ENCODE measurements at regions of chr9 and their contacts with region 1.

Region 1: GRCh38 chr9:75238311-75238978 is 150.1 kb downstream of the OSTF1 start:
- DNase-seq: peak; percentile 28
- H3K4me3 ChIP-seq: no peak overlapping the region
- CTCF ChIP-seq: peak; percentile 48

Region 2: DNA sequence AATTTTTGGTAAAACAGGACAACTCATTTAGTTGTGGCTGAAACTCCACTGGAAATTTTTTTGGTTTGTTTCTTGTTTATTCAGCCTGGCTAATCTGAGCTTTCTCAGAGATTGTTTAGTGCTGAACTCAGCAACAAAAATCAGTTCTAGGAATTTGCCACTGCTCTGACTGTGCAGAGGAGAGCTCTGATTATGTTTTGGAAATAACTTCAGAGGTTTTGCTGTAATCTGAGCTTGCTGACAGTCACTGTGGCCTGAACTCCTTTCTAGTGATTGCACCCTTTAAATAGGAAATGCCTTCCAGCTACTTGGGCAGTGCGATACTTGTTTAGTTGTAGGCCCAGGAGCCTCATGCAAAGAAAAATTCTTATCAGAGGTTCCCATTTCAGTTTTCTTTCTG is 89.9 kb before region 1 on chr9:
- CTCF ChIA-PET with region 1: no interaction called
- POLR2A ChIA-PET with region 1: no interaction called
- DNase-seq: peak; percentile 93
- H3K4me3 ChIP-seq: no peak overlapping the region
- CTCF ChIP-seq: no peak

Region 3: DNA sequence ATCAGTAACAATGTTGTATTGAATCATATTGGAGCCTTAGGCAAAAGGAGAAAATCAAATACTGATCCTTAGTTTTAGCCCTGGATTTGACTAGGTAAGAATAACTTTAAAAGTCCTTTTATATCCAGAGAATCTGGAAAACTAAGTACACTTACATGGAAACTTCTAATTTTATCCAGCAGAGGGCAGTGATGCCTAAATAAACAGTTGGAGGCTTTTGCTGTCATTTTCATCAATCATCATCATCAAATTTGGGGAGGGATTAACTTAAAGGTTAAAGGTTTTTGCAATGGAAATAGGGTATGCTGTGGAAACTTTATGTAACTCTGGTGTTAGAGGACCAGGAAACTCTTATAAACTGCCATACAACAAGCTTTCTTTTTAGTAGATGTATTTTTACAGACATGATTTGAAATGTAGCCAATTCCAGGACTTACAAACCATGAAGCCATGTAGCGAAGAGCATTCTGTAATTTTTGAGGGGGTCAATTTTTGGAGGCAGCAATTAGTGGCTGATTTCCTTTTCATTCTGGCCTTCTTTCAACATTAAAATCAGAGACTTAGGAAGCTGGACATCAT is 37.5 kb before region 1 on chr9:
- CTCF ChIA-PET with region 1: interaction called, 13 read pairs
- POLR2A ChIA-PET with region 1: no interaction called
- DNase-seq: no peak
- H3K4me3 ChIP-seq: no peak overlapping the region
- CTCF ChIP-seq: peak; percentile 31

Region 4: GRCh38 chr9:75213765-75214164 is 24.7 kb before region 1 on chr9:
- CTCF ChIA-PET with region 1: no interaction called
- POLR2A ChIA-PET with region 1: no interaction called
- DNase-seq: no peak
- H3K4me3 ChIP-seq: no peak overlapping the region
- CTCF ChIP-seq: no peak

Region 5: GRCh38 chr9:75226403-75227139 is 11.9 kb before region 1 on chr9:
- CTCF ChIA-PET with region 1: no interaction called
- POLR2A ChIA-PET with region 1: no interaction called
- DNase-seq: no peak
- H3K4me3 ChIP-seq: no peak overlapping the region
- CTCF ChIP-seq: no peak

Region 6: DNA sequence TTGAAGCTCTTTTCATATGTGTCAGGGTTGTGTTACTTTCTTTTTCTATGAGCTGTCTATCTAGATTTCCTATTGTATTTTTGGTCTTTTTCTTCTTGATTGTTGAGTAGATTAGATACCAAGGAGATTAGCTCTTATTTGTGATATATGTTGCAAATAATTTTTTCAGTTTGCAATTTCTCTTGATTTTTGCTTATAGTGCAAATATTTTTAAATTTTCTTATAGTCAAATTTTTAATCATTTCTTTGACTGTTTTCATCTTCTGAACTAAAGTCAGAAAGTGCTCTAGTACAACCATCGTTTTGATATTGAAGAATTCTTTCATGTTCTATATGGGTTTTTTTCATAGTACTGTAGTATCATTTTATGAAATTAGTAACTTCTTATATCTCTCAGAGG is 43.6 kb after region 1 on chr9:
- CTCF ChIA-PET with region 1: no interaction called
- POLR2A ChIA-PET with region 1: no interaction called
- DNase-seq: no peak
- H3K4me3 ChIP-seq: no peak overlapping the region
- CTCF ChIP-seq: no peak

Measured in AG04449 (cell line).